PC-3 (cell line): ENCODE measurements at regions of chr12 and their contacts with region 1.

Region 1: DNA sequence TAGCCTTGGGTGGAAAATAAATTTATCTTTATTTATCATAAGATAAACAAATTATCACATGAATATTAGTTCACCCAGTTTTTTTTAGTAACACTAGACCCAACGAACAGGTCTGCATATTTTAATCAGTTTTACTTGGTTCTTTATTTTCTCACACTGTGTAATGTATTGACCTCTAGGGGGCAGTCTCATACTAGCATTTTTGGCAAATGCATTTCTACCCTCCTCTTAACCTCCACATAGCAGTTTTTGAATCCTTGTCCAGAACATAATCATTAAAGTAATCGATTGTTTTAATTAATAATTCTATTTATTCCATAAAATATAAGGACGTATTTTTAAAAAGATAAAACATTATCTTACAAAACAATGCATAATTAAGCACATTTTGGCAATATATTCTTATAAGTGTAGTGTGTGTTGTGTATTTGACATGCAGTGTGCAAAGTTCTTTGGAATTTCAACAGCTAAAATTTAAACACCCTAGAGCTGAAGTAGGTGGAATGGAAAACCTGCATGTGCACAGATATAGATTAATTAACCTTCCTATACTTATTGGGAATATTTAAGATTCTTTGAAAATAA is 31.6 kb upstream of the PTPRQ start:
- DNase-seq: peak; percentile 72
- ATAC-seq: peak; percentile 81
- H3K4me3 ChIP-seq: no peak overlapping the region
- H3K27ac ChIP-seq: no peak overlapping the region
- H3K4me1 ChIP-seq: no peaks in the 10 kb centered on the region
- H3K27me3 ChIP-seq: peaks cover 7% of the 10 kb centered on the region; the same call in 1 of the 2 replicates
- CTCF ChIP-seq: peak; percentile 81

Region 2: DNA sequence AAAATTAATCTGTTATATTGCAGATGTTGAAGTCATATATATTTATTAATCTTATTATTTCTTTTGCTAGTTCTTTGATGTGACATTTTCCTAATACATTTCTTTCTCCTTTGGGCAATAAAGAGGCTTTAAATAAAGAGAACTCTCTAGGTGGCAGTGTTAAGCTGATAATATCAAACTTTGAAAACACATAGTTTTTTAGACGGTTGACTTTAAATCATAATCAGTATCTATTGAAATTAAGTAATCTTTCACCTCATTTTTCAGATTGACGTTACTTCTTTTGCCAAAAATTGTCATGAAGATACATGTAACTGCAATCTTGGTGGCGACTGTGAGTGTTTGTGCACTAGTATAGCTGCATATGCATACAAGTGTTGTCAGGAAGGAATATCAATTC is 99.3 kb before region 1 on chr12:
- CTCF ChIA-PET with region 1: no interaction called
- POLR2A ChIA-PET with region 1: no interaction called
- intact Hi-C with region 1: loop called (anchors 5 kb)
- DNase-seq: peak; percentile 49
- ATAC-seq: 0 out of 2 replicates have a peak, but pooled peaks have one; percentile 33
- H3K4me3 ChIP-seq: no peak overlapping the region
- H3K27ac ChIP-seq: no peak overlapping the region
- H3K4me1 ChIP-seq: no peaks in the 10 kb centered on the region
- H3K27me3 ChIP-seq: no peaks in the 10 kb centered on the region
- CTCF ChIP-seq: peak; percentile 55

Region 3: DNA sequence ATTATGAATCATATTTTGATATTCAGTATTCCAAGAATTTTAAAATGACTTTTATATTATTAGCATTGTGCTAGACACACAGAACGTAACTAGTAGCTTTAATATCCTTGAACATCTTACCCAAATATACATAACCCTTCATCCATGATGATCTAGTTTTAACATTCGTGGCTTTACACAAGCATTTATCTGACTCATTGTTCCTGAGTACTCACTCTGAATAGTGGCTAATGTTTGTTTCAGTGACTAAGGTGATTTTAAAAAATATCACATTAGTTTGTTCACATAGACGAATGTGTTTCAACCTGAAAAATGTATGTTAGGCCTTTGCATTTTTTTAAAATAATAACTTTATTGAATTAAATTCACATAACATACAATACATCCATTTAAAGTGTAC is 48.4 kb before region 1 on chr12:
- CTCF ChIA-PET with region 1: no interaction called
- POLR2A ChIA-PET with region 1: no interaction called
- intact Hi-C with region 1: no loop called
- DNase-seq: peak; percentile 56
- ATAC-seq: peak; percentile 87
- H3K4me3 ChIP-seq: no peak overlapping the region
- H3K27ac ChIP-seq: peak overlapping the region; percentile 62
- H3K4me1 ChIP-seq: peaks cover 17% of the 10 kb centered on the region; the same call in 1 of the 2 replicates
- H3K27me3 ChIP-seq: no peaks in the 10 kb centered on the region
- CTCF ChIP-seq: no peak

Region 4: DNA sequence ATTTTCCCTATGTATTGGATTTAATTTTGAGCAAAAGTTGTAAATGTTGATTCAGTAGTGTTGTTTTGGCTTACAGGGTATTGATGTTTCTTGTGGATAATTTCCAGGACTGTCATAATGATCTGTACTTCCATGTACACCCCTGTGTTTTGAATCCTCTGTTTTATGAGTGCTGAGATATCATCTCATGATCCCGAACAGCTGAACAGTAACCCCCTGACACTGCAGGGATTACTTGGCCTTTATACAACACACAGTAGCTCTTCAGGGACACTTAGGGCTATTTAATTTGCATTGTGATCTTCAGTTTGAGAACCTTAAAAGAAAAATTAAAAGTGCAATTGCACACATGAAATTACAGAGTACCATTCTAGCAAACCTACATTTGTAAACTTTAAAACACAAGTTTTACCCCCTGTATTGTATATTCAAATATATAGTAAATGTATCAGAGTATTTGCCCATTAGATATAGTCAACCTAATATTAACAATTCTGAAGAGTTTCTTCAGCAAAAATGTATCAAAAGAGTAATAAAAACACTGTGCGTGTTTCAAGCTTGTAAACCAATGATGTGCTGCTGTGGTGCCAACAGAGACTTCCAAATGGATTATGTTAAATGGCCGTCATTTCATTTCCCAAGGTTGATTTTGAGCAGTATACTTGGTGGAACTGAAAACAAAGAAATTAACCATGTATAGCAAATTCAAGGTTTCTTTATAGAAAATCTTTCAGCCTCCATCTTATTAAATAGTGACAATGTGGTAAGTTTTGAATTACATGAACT is 267.1 kb after region 1 on chr12:
- CTCF ChIA-PET with region 1: no interaction called
- POLR2A ChIA-PET with region 1: no interaction called
- intact Hi-C with region 1: loop called (anchors 1 kb)
- DNase-seq: no peak
- ATAC-seq: no peak
- H3K4me3 ChIP-seq: no peak overlapping the region
- H3K27ac ChIP-seq: no peak overlapping the region
- H3K4me1 ChIP-seq: no peaks in the 10 kb centered on the region
- H3K27me3 ChIP-seq: 0 out of 2 replicates have a peak, but pooled peaks cover 11% of the 10 kb centered on the region
- CTCF ChIP-seq: no peak

Region 5: DNA sequence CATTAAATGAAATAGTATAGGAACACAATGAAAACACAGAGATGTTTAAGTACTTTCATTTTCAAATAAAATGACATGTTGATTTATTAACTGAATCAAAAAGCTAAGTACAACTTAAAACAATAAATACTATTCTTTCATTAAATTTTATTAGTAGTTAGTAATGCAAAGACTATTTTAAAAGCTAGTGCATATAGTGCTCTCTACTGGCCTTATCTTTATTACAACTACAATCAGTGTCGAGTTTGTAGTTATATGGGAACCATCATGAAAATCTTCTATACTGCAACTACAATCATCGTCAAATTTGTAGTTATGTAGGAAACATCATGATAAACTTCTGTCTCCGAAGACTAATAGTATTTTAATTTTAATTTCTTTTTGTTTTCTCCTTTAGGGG is 534.1 kb after region 1 on chr12:
- CTCF ChIA-PET with region 1: no interaction called
- POLR2A ChIA-PET with region 1: no interaction called
- intact Hi-C with region 1: loop called (anchors 5 kb)
- DNase-seq: peak; percentile 16
- ATAC-seq: peak; percentile 64
- H3K4me3 ChIP-seq: no peak overlapping the region
- H3K27ac ChIP-seq: no peak overlapping the region
- H3K4me1 ChIP-seq: no peaks in the 10 kb centered on the region
- H3K27me3 ChIP-seq: no peaks in the 10 kb centered on the region
- CTCF ChIP-seq: peak; percentile 41